A673 (cell line): ENCODE measurements at regions of chr7 and their contacts with region 1.

Region 1: DNA sequence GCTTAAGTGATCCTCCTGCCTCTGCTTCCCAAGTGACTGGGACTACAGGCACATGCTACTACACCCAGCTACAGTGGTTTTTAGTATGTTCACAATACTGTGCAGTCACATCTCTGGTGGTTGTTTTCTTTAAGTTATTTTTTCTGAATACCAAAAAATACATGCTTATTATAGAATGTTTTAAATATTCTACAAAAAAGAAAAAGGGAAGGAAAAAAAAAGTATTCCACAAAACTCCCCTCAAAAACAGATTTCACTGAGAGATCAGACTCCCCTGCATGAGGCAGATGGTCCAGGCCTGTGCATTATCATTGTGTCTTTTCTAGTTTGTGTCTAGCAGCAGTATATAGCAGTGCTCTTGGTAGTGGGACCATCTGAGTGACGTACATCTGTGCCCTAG is 36.8 kb downstream of the OGDH start:
- DNase-seq: no peak
- H3K4me3 ChIP-seq: no peak overlapping the region
- H3K27ac ChIP-seq: no peak overlapping the region
- H3K4me1 ChIP-seq: peaks cover 20% of the 10 kb centered on the region
- H3K27me3 ChIP-seq: no peaks in the 10 kb centered on the region
- CTCF ChIP-seq: no peak

Region 2: DNA sequence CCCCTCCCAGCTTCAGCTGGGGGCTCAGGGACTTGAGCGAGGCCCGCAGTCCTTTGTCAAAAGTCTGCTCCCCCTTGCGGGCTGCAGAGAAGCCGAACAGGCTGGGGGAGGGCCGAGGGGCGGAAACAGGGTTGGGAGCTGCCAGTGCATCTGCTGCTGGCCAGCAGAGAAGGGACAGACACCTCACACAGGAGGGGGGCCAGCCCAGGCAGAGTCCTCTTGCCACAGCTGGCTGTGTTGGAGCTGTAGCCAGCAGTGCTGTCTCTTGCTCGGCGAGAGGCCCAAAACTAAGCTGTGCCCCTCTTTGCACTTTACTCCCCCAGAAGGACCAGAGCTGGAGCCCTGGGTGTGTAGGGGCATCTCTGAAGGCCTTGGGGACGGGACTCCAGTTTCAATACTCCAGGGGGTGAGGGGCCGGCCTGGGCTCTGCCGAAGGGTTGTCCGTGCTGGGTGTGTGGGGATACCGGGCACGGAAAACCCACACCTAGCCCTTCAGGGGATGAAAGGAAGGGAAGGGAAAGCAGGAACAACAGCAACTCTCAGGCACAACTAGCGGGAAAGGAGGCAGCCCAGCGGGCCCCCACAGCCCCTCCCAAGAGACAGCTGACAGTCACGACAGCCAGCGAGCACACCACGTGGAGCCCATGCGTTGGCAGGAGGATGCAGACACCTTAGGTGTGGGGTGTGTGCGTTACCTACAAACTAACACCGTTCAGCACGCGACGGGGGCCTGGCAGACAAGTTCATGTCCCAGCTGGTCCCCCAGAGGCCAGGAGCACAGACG is 424.6 kb before region 1 on chr7:
- CTCF ChIA-PET with region 1: interaction called, 11 read pairs
- POLR2A ChIA-PET with region 1: no interaction called
- intact Hi-C with region 1: no loop called
- DNase-seq: no peak
- H3K4me3 ChIP-seq: no peak overlapping the region
- H3K27ac ChIP-seq: no peak overlapping the region
- H3K4me1 ChIP-seq: peaks cover 3% of the 10 kb centered on the region
- H3K27me3 ChIP-seq: no peaks in the 10 kb centered on the region
- CTCF ChIP-seq: no peak

Region 3: DNA sequence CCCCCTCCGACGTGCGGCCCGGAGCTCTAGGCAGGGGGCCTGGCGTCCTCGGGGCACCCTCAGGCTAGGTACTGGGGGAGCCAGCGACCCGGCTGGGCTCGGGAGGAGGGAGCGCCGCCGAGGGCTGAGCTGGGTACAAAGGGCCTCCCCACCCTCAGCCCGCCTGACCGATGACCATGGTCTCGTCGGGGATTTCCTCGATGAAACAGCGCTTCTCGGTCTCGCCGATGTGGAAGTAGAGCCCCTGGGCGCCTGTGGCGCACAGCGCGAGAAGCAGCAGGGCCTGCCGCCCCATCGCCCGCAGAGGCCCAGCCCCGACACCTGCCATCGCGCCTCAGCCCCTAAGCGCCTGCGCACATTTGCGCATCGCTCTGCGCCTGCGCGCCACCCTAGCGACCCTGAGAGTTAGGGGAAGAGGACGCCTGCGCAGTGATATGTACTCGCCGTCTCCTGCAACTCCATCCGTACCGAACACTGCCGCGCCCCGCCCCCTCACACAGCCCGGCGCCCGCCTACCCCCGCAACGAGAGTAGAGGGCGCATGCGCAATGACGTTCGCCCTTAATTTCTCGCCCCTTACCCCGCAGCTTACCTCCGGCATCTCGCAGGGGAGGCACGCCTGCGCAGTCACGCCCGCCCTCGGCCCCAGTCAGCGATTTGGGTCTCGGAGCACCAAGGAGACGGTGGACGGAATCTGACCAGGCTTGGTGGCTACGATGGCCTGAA is 61.2 kb before region 1 on chr7 and contains the start of gene TMED4:
- CTCF ChIA-PET with region 1: no interaction called
- POLR2A ChIA-PET with region 1: no interaction called
- intact Hi-C with region 1: no loop called
- DNase-seq: peak; percentile 99
- H3K4me3 ChIP-seq: peak within 1 kb of the TSS; percentile 88
- H3K27ac ChIP-seq: peak within 1 kb of the TSS; percentile 92
- H3K4me1 ChIP-seq: peaks cover 6% of the 10 kb centered on the region
- H3K27me3 ChIP-seq: no peaks in the 10 kb centered on the region
- CTCF ChIP-seq: no peak
- total RNA-seq, gene TMED4: 77.6 and 79.5 TPM in 2 replicates